ENCODE measurements at regions of chr12 and their contacts with region 1.

Region 1: DNA sequence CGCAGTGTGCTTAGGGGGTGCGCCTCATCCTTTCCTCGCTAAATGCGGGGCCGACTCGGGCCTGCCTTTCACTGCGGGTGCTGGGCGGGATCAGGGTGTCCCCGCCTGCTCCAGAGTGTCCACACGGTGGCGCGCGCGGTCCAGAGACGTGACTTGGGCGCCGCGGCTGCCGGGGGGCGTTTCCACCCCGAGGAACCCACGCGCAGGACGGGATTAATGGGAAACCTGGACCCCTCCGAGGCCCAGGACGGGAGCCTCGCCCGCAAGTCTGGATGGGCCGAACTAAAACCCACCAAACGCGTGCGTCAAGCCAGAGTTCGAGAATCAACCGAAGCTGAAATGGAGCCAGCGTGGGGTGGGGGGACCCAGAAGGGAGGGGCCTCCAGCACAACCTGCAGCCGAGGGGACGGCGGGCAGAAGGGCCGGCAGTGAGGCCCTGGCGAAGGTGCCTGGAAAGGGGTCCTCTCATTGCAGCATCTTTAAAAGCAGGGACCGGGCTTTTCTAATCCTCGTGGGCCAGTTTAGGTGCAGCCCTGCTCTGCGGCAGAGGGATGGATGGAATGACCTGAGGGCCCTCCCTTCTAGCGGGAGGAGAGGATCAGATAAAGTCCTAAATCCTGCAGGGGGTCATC is 93.3 kb downstream of the NINJ2 start:
- DNase-seq: no peak
- H3K4me3 ChIP-seq: peak overlapping the region; percentile 54 to 57
- H3K27ac ChIP-seq: peak overlapping the region; percentile 92
- H3K4me1 ChIP-seq: peaks cover 45% of the 10 kb centered on the region
- H3K27me3 ChIP-seq: no peaks in the 10 kb centered on the region
- CTCF ChIP-seq: peak; percentile 89 to 94 (median 93)
- POLR2A ChIP-seq: no peak

Region 2: DNA sequence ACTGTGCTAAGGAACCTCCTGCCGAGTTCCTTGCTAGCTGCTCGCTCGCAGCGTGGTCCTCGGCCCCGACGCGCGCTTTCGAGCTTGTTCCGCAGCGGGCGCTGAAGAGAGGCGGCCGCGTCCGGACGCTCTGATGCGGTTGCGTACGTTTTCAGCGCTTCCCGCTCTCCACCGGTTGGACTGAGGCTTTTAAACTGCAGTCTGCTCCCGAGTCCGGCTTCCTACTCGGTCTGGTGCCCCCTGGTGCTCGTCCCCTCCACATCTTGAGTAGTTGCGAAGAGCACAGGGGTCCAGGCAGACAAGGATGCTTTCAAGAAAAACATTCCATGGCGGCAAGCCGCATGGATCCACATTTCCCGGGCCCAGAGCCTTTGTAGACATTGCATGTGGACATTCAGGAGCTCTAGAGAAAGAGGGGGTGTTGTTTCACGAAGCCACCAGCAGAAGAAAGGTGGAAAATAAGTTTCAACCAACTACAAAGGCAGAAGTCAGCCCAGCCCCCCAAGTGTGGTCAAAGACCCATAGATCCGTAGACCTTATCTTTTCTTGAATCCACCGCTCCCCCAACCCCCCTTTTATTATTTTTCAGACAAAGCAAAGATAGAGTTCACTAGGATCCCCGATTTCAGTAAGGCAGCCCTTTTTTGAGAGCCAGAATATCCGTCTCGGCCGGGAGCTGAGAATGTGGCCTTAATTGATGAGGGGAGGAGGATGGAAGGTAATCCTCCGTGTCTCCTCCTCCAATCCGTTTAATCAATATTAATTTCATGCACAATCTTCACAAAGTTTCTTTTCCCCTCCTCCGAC is 181.5 kb after region 1 on chr12:
- intact Hi-C with region 1: loop called (anchors 2 kb)
- DNase-seq: peak in 1 of 2 donors; percentile 96
- H3K4me3 ChIP-seq: peak overlapping the region; percentile 78 to 96
- H3K27ac ChIP-seq: peak overlapping the region; percentile 100
- H3K4me1 ChIP-seq: peaks cover 27% of the 10 kb centered on the region
- H3K27me3 ChIP-seq: no peaks in the 10 kb centered on the region
- CTCF ChIP-seq: peak; percentile 37 to 70 (median 51)
- POLR2A ChIP-seq: peak in 1 of 2 donors; percentile 28

Region 3: DNA sequence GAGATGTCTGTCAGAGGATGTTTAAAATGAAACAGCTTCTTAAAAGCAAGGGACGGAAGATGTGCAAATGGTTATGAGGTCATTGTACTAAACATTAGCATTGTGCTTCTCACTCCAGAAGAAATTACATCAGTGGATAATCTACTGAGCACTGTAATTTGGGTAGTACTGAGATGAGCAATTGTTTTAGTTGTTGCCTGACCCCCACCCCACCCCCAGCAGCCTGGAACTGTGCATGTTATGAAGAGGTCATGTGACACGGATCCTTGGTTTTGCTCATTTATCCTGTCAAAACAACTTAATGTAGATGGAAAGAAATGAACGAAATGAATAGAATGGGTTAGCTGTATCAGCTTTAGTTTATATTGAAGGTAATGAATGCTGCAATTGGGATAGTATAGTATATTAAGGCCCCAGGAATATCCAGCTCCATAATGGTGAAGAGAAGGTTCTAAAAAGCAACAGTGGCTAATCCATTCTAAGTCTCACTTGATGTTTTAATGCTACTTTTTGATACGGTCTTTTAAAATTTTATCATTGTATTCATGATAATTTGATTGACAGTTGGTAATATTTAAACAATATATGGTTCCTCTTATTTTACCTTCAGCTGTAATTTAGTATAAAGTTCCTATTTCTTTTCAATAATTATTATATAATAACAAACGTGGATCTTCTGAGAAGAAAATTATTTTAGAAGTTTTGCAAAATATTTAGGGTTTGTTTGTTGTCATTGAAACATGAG is 240.9 kb after region 1 on chr12:
- intact Hi-C with region 1: loop called (anchors 2 kb)
- DNase-seq: no peak
- H3K4me3 ChIP-seq: no peak overlapping the region
- H3K27ac ChIP-seq: no peak overlapping the region
- H3K4me1 ChIP-seq: peaks cover 32% of the 10 kb centered on the region
- H3K27me3 ChIP-seq: no peaks in the 10 kb centered on the region
- CTCF ChIP-seq: no peak
- POLR2A ChIP-seq: no peak

Region 4: GRCh38 chr12:949453-950191 is 379.7 kb after region 1 on chr12 and contains the start of gene RAD52:
- intact Hi-C with region 1: loop called (anchors 2 kb)
- DNase-seq: peak; percentile 96 to 97
- H3K4me3 ChIP-seq: peak within 1 kb of the TSS; percentile 67 to 70
- H3K27ac ChIP-seq: peak within 1 kb of the TSS; percentile 83
- H3K4me1 ChIP-seq: peaks cover 18% of the 10 kb centered on the region
- H3K27me3 ChIP-seq: no peaks in the 10 kb centered on the region
- CTCF ChIP-seq: peak; percentile 96 to 100 (median 99)
- POLR2A ChIP-seq: peak in 1 of 2 donors; percentile 64
- total RNA-seq, gene RAD52: 40.3 TPM

Region 5: DNA sequence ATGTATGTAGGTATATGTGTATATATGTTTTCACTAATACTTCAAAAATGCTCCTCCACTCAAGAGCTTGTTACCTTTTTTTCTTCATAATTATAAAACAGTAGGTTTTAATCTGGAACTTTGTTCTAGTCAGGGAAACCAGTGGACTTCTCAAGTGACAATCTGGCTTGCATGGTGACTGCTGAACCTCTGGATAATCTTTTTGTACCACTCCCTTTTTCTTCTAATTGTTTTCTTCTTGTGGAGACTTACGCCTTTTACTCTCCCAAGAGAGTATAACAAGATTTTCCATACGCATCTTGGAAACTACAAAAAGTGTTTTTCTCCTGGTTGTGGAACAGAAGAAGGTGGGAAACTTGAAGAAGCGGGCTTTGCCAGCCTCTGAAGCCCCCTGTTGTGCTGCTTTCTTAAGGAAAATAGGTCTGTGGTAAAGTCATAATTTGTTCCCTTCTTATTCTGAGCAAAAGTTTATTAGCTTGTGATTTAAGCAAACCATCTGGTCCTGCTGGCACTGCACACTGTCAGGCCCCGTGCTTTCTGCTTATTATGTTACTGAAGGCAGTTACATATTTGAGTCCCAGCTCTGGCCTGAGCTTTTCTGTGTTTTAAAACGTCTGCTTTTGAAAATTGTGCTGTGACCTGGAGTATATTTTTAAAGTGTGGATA is 712.9 kb after region 1 on chr12:
- intact Hi-C with region 1: no loop called
- DNase-seq: peak in 1 of 2 donors; percentile 89
- H3K4me3 ChIP-seq: no peak overlapping the region
- H3K27ac ChIP-seq: peak overlapping the region; percentile 64
- H3K4me1 ChIP-seq: peaks cover 23% of the 10 kb centered on the region
- H3K27me3 ChIP-seq: no peaks in the 10 kb centered on the region
- CTCF ChIP-seq: no peak
- POLR2A ChIP-seq: no peak

Measured in vagina (tissue), 2 donors.